Activated naive CD4-positive, alpha-beta T cell treated with anti-CD3 and anti-CD28 coated beads for 36 hours (primary cell): ENCODE measurements at regions of chr13 and their contacts with region 1.

Region 1: DNA sequence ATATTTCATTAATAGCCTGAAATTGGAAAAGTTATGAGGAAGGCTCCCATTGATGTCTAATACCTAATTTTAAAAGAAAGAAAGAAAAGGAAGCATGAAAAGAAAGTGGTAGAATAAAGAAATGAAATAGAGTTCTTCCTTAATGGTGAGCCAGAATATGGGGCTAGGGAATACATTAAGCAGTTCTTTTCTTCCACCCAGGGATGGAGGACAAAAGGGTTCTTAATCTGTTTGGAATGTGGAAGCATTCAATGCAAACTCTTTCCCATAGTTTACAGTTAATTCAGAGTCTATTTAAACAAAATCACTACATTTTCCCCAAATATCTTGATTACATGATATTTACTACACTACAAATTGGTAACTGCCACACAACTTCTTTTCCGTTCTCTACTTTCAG is 18.4 kb upstream of the ZMYM2 start:
- DNase-seq: no peak
- H3K4me3 Mint-ChIP-seq: no peak overlapping the region
- H3K27ac Mint-ChIP-seq: no peak overlapping the region
- H3K4me1 Mint-ChIP-seq: no peaks in the 10 kb centered on the region
- H3K27me3 Mint-ChIP-seq: peaks cover 6% of the 10 kb centered on the region

Region 2: GRCh38 chr13:19927117-19927748 is 12.9 kb before region 1 on chr13:
- CTCF ChIA-PET with region 1: interaction called, 10 read pairs
- intact Hi-C with region 1: no loop called
- DNase-seq: no peak
- H3K4me3 Mint-ChIP-seq: no peak overlapping the region
- H3K27ac Mint-ChIP-seq: no peak overlapping the region
- H3K4me1 Mint-ChIP-seq: no peaks in the 10 kb centered on the region
- H3K27me3 Mint-ChIP-seq: no peaks in the 10 kb centered on the region